ENCODE measurements at regions of chr3 and their contacts with region 1.

Region 1: DNA sequence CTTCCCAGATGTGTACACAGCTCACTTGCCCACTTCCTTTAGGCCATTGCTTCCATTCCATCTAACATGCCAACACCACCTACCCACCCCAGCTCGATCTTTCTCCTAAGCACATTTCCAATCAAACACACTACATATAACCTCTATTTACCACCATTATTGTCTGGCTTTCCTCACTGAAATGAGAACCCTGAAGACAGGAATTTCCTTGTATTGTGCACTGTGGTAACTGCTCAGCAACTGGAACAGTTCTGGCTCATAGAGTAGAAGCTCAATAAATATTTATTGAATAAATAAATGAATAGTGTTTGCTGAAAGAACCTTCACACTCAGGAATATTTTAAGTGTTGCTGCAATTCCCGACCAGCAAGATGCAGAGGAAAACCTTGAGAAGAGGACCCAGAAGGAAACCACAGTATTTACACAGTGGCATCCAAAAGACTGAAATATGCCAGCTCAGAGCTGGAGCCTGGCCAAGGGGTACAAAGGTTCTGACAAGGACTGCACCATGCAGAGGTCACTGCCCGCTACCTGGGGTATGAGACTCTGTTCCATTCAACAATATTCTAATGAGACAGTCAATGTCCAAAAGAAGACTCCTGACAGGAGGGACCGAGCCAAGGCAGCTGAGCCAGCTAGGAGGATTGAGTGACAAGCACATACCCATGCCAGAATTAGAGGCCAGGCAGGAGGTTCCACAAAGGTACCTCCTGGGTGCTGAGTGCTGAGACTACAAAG is 168.8 kb downstream of the NUP210 start:
- DNase-seq: peak; percentile 34
- ATAC-seq: peak; percentile 61
- H3K4me3 ChIP-seq: no peak overlapping the region
- H3K27ac ChIP-seq: no peak overlapping the region
- H3K4me1 ChIP-seq: peaks cover 13% of the 10 kb centered on the region
- H3K27me3 ChIP-seq: no peaks in the 10 kb centered on the region
- CTCF ChIP-seq: no peak

Region 2: DNA sequence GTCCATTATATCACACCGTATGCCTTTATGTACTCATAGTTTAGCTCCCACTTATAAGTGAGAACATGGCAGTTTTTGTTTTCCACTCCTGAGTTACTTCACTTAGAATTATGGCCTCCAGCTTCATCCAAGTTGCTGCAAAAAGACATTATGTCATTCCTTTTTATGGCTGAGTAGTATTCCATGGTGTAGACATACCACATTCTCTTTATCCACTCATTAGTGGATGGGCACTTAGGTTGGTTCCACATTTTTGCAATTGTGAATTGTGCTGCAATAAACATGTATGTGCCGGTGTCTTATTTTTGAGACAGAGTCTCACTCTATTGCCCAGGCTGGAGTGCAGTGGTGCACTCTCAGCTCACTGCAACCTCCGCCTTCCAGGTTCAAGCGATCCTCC is 104.0 kb before region 1 on chr3:
- CTCF ChIA-PET with region 1: no interaction called
- POLR2A ChIA-PET with region 1: interaction called, 10 read pairs
- intact Hi-C with region 1: no loop called
- DNase-seq: no peak
- ATAC-seq: no peak
- H3K4me3 ChIP-seq: no peak overlapping the region
- H3K27ac ChIP-seq: no peak overlapping the region
- H3K4me1 ChIP-seq: no peaks in the 10 kb centered on the region
- H3K27me3 ChIP-seq: no peaks in the 10 kb centered on the region
- CTCF ChIP-seq: no peak